SK-N-SH (cell line): ENCODE measurements at regions of chrX and their contacts with region 1.

Region 1: GRCh38 chrX:72045552-72046277 is 86.0 kb downstream of the RTL5 start:
- DNase-seq: peak; percentile 66
- H3K4me3 ChIP-seq: no peak overlapping the region
- H3K27ac ChIP-seq: peak overlapping the region; percentile 25 to 99; a peak in 3 of 4 replicates
- H3K4me1 ChIP-seq: peaks cover 8 to 74% of the 10 kb centered on the region in 2 experiments; a peak in 3 of 4 replicates
- H3K27me3 ChIP-seq: peaks cover 3% of the 10 kb centered on the region; the same call in 1 of the 2 replicates
- CTCF ChIP-seq: no peak
- EP300 ChIP-seq: no peak
- RAD21 ChIP-seq: no peak

Region 2: DNA sequence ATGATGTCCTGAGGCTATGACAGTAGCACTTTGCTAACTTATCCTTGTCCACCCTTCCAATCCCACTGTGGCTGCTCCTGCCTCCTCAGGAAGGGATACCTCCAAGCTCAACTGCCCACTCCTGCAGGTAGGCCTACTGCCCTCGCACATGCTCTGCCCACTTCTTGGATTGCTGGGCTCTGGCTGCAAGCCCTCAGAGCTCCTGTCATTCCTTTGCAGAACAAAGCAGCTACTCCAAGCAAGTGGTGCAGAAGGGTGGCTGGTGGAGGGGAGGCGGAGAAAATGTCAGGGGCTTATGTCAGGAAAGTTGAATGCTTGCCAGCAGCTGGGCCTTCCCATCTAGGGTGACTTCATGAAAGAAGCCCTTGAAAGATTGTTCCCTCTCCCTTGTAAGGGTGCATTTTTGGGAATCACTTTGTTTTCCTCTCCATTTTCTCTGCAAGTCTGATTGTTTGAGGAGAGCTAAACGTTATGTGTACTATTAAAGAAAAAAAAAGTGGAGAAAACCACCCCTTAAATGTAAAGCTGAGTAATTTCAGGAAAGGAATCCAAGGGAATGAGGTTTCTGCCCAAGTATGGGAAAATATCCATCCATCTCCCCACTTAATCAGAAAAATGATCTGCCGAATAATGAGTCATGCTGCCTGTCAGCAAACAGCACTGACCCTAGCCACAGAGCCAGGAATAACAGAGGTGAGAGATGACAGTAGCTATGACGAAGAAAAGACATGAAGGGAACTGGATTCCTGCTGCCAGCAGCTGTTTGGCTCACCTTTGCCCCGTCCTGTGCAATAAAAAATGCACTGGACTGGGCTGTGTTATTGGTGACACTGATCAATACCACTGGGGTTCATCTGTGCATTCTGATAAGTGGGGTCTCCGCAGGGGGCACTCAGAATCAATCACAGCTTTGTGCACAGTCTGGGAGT is 16.0 kb before region 1 on chrX:
- CTCF ChIA-PET with region 1: interaction called, 29 read pairs
- POLR2A ChIA-PET with region 1: interaction called, 3 read pairs
- DNase-seq: peak; percentile 47
- H3K4me3 ChIP-seq: peak overlapping the region in 1 of 2 experiments; percentile 40; a peak in 1 of 4 replicates
- H3K27ac ChIP-seq: peak overlapping the region; percentile 61 to 78
- H3K4me1 ChIP-seq: peaks cover 18 to 33% of the 10 kb centered on the region in 2 experiments
- H3K27me3 ChIP-seq: 0 out of 2 replicates have a peak, but pooled peaks cover 9% of the 10 kb centered on the region
- CTCF ChIP-seq: no peak
- EP300 ChIP-seq: peak; percentile 57 to 90
- RAD21 ChIP-seq: no peak

Region 3: GRCh38 chrX:72060196-72060920 is 14.6 kb after region 1 on chrX:
- CTCF ChIA-PET with region 1: interaction called, 34 read pairs
- POLR2A ChIA-PET with region 1: no interaction called
- DNase-seq: peak; percentile 68
- H3K4me3 ChIP-seq: no peak overlapping the region
- H3K27ac ChIP-seq: peak overlapping the region in 1 of 2 experiments; percentile 41; a peak in 2 of 4 replicates
- H3K4me1 ChIP-seq: peaks cover 0 to 16% of the 10 kb centered on the region in 2 experiments; a peak in 2 of 4 replicates
- H3K27me3 ChIP-seq: peaks cover 5% of the 10 kb centered on the region; the same call in 1 of the 2 replicates
- CTCF ChIP-seq: no peak
- EP300 ChIP-seq: no peak
- RAD21 ChIP-seq: peak; percentile 40

Region 4: GRCh38 chrX:72069350-72070160 is 23.8 kb after region 1 on chrX:
- CTCF ChIA-PET with region 1: interaction called, 34 read pairs
- POLR2A ChIA-PET with region 1: no interaction called
- DNase-seq: no peak
- H3K4me3 ChIP-seq: peak overlapping the region in 1 of 2 experiments; percentile 40; a peak in 2 of 4 replicates
- H3K27ac ChIP-seq: peak overlapping the region in 1 of 2 experiments; percentile 45; a peak in 2 of 4 replicates
- H3K4me1 ChIP-seq: peaks cover 0 to 30% of the 10 kb centered on the region in 2 experiments; a peak in 1 of 4 replicates
- H3K27me3 ChIP-seq: peaks cover 67% of the 10 kb centered on the region
- CTCF ChIP-seq: no peak
- EP300 ChIP-seq: no peak
- RAD21 ChIP-seq: no peak